Lower leg skin (tissue), 4 donors: ENCODE measurements at regions of chr4 and their contacts with region 1.

Region 1: DNA sequence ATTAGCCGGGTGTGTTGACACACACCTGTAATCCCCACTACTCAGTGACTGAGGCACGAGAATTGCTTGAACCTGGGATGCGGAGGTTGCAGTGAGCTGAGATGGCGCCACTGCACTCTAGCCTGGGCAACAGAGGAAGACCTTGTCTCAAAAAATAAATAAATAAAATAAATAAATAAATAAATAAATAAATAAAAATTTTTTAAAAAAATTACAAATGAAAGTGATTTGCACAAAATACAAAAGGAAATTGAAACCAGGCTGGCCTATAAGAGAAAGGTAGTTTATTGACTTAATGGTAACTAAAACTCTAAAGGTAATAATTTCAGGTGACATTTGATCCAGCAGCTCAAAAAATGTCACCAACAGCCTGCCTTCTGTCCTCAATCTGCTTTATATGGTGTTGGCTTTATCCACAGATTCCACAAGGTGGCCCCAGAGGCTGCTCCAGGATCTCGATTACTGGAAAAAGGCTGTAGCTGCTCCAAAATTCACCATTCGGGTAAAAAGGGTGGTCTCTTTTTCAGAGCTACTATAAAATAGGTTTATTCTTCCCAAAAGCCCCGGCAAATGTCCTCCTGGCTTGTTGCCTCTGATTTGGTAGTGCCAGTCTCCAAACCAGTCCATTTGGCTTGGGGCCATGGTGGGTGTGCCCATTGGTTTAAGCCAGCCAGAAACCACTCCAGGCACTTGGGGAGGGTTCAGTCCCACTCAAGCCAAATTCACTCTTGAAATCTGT is 61.4 kb upstream of the TRIM2 start:
- DNase-seq: peak; percentile 53 to 91
- H3K4me3 ChIP-seq: no peak overlapping the region
- CTCF ChIP-seq: no peak
- POLR2A ChIP-seq: no peak

Region 2: GRCh38 chr4:153115322-153116290 is 27.3 kb before region 1 on chr4:
- intact Hi-C with region 1: no loop called
- DNase-seq: peak in 1 of 2 donors; percentile 74
- H3K4me3 ChIP-seq: no peak overlapping the region
- CTCF ChIP-seq: no peak
- POLR2A ChIP-seq: no peak

Region 3: DNA sequence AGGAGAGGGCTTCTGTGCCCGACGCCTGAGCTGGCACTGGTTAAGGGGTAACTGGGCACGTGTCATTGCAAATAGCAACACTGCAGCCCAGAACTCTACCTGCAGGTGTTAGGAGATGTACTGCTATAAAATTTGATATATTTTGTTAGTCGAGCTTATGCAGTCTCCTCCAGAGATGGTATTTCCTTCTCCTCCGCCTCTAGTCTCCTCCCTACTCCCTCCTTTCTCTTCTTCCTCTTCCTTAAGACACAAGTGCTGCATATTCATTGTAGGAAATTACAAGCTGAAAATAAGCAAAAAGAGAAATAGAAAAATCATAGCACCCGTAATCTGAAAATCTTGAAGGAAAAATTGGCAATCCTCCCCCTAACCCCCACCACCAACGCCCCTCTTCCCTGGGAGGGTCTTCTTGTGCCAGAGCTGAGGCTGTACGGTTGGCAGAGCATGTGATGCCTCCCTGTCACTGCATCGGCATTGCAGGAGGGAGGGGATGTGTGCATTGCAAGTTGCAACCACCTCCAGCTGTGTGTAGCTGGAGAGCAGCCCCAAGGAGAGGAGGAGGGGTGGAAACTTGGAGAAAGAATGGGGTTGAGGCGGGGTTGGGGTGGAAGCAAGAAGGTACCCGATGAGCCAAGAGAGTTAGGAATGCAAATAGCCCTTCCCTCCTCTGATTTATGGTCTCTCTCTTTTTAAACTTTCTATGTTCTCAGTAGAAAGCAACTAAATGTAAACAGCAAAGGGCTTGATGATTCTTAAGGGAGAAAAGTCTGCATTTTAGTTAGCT is 153.4 kb after region 1 on chr4:
- intact Hi-C with region 1: loop called (anchors 10 kb)
- DNase-seq: peak in 1 of 2 donors; percentile 29
- H3K4me3 ChIP-seq: no peak overlapping the region
- CTCF ChIP-seq: no peak
- POLR2A ChIP-seq: no peak

Region 4: DNA sequence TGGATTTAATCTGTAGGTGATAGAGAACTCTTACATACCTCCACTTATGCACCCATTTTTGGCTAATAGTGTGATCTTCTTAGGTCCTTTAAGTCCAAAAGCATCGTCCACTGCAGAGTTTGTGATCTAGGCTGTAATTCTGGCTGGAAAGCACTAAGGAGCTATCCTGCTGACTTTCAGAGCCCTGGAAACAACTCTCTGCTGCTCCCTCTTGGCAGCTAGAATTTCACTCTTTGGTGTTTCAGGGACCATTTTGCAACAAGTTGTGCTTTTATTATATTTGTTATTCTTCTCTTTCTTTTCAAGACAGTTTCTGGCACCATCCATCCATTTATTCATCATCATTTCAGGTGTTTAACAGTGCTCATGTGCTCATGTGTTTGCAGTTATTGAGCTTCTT is 1768.2 kb after region 1 on chr4:
- intact Hi-C with region 1: no loop called
- DNase-seq: no peak
- H3K4me3 ChIP-seq: no peak overlapping the region
- CTCF ChIP-seq: no peak
- POLR2A ChIP-seq: no peak